ENCODE measurements at regions of chr13 and their contacts with region 1.

Region 1: DNA sequence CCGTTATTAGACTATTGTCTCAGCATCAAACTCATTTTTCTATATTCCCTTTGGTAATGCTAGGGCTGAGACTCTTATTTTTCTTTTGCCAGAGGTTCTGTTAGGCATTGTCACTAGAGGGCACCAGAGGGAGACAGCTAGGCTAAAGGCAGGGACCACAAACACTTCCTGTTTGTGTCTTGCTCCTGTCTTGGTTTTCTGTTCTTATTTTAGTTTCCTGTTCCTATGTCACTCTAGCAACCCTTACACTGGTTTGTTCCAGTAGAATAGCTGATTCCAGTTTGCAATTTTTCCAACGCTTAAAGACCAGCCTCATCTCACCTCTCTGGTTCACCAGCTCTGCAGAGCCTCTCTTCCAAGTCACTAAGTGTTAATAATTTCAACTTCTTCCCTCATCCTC is 772.0 kb downstream of the DIAPH3 start:
- DNase-seq: no peak
- ATAC-seq: peak; percentile 52 to 71 (median 64)
- H3K4me3 ChIP-seq: no peak overlapping the region
- H3K27ac ChIP-seq: no peak overlapping the region
- H3K4me1 ChIP-seq: peaks cover 4% of the 10 kb centered on the region
- H3K27me3 ChIP-seq: no peaks in the 10 kb centered on the region
- CTCF ChIP-seq: peak; percentile 72

Region 2: DNA sequence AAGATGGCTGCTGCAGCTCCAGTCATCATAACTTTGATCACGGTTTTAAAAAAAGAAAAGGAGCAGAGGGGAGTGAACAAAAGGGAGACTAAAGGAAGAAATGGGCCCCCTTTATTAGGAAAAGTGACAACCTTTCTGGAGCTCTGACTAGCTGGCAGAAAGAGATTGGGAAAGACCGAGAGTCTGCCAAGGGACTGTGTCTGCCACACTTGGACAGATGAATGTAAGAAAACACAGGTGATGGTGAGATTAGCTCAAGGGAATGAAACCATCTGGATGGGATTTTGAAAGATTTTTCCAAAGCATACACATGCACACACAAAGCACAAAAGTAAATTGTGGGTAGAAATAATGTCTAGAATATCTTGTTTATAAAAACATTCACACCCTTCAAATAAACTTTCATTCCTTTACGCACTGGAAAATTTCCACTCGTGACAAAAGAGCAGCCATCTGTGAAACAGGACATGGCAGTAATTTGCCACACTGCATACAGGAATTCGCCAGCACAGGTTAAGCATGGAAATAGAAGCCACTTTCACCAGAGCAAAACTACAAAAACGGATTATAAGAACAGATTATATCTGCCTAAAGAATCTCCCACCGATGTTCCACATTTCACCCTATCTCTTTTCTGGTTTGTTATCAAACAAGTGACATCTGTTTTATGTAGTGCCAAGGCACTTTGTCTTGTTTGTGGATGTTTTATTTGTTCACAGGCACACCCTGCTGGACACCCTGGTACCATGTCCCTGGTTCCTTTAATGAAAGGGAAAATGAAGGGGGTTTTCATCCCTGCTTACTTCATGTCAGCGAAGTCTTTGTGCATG is 47.5 kb before region 1 on chr13:
- intact Hi-C with region 1: loop called in 1 of 2 experiments (anchors 5 kb)
- DNase-seq: no peak
- ATAC-seq: no peak
- H3K4me3 ChIP-seq: no peak overlapping the region
- H3K27ac ChIP-seq: no peak overlapping the region
- H3K4me1 ChIP-seq: no peaks in the 10 kb centered on the region
- H3K27me3 ChIP-seq: no peaks in the 10 kb centered on the region
- CTCF ChIP-seq: no peak

Region 3: DNA sequence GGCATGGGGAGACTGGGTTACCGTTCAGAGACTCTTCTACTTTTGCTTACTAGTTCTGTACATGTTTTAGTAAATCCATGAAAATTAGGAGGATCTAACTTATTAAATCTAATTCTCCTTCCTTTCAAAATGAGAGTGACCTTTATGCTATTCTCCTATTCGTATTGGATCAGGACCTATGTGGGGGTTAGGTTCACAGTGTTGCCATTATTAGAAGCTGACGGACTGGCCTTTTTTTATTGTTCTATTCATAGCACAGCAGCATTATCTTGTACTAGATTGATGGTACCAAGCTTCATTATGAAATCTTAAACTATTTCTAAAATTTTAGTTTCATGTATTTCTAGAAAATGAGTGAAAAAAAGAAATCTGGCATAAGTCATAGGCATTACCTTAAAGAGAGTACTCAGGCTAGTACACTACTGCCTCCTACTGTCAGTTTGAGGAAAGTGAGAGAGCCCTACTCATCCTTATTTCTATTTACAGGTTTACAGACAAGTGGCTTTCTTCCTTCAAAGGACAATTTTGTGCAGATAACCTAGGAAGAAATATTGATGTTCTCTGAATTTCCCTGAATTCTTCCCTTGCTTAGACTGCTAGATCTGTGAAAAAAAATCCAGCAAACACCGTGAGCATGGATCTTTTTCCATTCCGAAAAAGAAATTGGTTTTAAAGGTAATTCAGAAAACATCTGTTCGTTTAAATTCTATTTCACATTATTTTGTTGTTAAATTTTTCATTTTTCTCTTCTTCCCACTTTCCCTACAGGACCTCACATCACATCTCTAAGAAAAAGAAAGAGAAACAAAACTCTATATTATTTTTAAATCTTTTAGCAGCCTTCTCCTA is 286.5 kb after region 1 on chr13:
- intact Hi-C with region 1: loop called in 1 of 2 experiments (anchors 5 kb)
- DNase-seq: no peak
- ATAC-seq: peak in 3 of 4 donors; percentile 57 to 76 (median 74)
- H3K4me3 ChIP-seq: no peak overlapping the region
- H3K27ac ChIP-seq: no peak overlapping the region
- H3K4me1 ChIP-seq: peaks cover 4% of the 10 kb centered on the region
- H3K27me3 ChIP-seq: no peaks in the 10 kb centered on the region
- CTCF ChIP-seq: peak; percentile 61

Region 4: GRCh38 chr13:59771272-59771671 is 379.6 kb after region 1 on chr13:
- intact Hi-C with region 1: loop called in 1 of 2 experiments (anchors 5 kb)
- DNase-seq: no peak
- ATAC-seq: no peak
- H3K4me3 ChIP-seq: no peak overlapping the region
- H3K27ac ChIP-seq: no peak overlapping the region
- H3K4me1 ChIP-seq: no peaks in the 10 kb centered on the region
- H3K27me3 ChIP-seq: no peaks in the 10 kb centered on the region
- CTCF ChIP-seq: peak; percentile 50